Activated T-helper 1 cell treated with anti-CD3 and anti-CD28 coated beads, Interleukin-12 subunit alpha, Interleukin-12 subunit beta, Interleukin-2, Interleukin-4 antibody, amounts not matched to agents 30 ng/mL and 10 ng/mL and 1 ng/mL, durations not matched to agents 14 hours and 24 hours and 36 hours (primary cell): ENCODE measurements at regions of chr22 and their contacts with region 1.

Region 1: DNA sequence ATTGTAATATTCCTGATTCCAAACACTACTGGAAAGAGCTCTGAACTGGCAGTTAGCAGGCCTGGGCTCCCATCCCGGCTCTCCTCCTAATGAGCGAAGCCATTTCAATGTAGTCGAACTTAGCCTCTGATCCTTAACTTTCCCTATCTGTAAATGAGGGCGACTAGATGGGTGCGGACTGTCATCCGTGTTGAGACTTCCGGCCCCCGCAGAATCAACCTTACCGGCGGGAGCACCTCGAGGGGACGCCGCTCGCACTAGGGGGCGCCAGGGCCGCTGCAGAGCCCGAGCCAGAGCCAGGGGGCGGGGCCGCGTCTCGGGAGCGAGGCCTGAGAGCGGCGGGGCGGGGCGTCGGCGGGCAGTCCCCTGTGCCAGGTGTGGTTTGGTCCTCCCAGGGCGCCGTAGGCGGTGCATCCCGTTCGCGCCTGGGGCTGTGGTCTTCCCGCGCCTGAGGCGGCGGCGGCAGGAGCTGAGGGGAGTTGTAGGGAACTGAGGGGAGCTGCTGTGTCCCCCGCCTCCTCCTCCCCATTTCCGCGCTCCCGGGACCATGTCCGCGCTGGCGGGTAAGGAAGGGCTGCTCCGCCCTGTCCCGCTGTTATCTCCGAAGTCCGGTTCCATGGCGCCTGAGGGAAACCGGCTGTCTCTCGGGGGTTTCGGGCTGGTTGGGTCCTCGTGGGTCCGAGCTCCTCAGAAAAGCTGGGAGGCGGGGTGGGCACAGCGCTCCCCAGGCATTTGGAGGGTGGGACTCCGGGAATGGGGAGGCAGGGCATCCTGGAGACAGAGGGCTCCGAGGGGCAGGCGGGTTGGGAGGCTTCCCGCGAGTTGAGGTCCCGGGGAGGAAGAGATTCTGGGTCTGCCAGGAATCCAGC is at the start of gene LIMK2:
- DNase-seq: peak; percentile 95
- H3K4me3 Mint-ChIP-seq: peak within 1 kb of the TSS; percentile 89
- H3K27ac Mint-ChIP-seq: peak within 1 kb of the TSS; percentile 83
- H3K4me1 Mint-ChIP-seq: peaks cover 54% of the 10 kb centered on the region
- H3K27me3 Mint-ChIP-seq: no peaks in the 10 kb centered on the region
- total RNA-seq, gene LIMK2: 39.8 and 40.7 TPM in 2 replicates

Region 2: GRCh38 chr22:30628491-30628890 is 583.6 kb before region 1 on chr22:
- intact Hi-C with region 1: no loop called
- DNase-seq: no peak
- H3K4me3 Mint-ChIP-seq: no peak overlapping the region
- H3K27ac Mint-ChIP-seq: no peak overlapping the region
- H3K4me1 Mint-ChIP-seq: no peaks in the 10 kb centered on the region
- H3K27me3 Mint-ChIP-seq: no peaks in the 10 kb centered on the region

Region 3: GRCh38 chr22:30968924-30969539 is 243.1 kb before region 1 on chr22 and contains the start of gene TUG1:
- intact Hi-C with region 1: loop called (anchors 10 kb)
- DNase-seq: peak; percentile 97
- H3K4me3 Mint-ChIP-seq: peak within 1 kb of the TSS; percentile 91
- H3K27ac Mint-ChIP-seq: peak within 1 kb of the TSS; percentile 96
- H3K4me1 Mint-ChIP-seq: peaks cover 65% of the 10 kb centered on the region
- H3K27me3 Mint-ChIP-seq: no peaks in the 10 kb centered on the region
- total RNA-seq, gene TUG1: 68.0 and 71.3 TPM in 2 replicates

Region 4: DNA sequence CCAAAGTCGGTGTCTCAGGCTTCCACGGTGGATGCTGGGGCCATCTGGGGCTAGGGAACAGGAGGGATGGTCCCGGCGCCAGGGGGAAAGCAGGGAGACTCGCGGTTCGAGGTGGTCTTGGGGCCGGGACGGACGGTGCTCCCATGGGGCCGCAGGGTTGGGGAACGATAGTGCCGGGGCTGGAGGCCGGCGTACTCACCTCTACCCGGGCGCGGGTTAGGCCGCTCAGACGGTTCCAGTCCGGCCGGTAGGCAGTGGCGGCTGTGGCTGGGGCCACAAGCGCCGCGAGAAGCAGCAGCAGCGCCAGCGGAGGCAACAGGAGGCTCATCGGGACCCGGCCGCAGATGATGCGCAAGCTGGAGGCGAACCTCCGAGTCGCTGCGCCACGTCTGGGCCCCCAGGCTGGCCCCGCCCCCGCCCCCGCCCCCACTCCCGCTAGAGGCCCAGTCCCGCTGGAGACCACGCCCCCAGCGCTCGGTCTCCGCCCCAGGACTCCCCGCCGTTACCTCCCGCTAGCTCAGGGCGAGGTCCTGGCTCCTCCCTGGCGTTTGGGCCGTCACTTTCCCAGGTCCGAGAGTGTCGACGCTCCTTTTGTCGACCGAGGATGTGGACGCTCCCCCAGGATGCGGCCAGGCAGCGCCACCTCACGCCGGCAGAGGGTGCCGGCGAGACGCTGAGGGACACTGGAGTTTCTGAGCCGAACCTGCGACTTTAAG is 104.8 kb before region 1 on chr22 and contains the start of gene SELENOM:
- intact Hi-C with region 1: loop called (anchors 1 kb)
- DNase-seq: peak; percentile 86
- H3K4me3 Mint-ChIP-seq: peak within 1 kb of the TSS; percentile 83
- H3K27ac Mint-ChIP-seq: peak within 1 kb of the TSS; percentile 33
- H3K4me1 Mint-ChIP-seq: peaks cover 19% of the 10 kb centered on the region
- H3K27me3 Mint-ChIP-seq: peaks cover 6% of the 10 kb centered on the region
- total RNA-seq, gene SELENOM: 6.4 and 9.8 TPM in 2 replicates

Region 5: GRCh38 chr22:31122532-31123291 is 89.4 kb before region 1 on chr22 and contains the start of gene INPP5J:
- intact Hi-C with region 1: no loop called
- DNase-seq: no peak
- H3K4me3 Mint-ChIP-seq: no peak within 1 kb of the TSS
- H3K27ac Mint-ChIP-seq: peak within 1 kb of the TSS; percentile 19
- H3K4me1 Mint-ChIP-seq: no peaks in the 10 kb centered on the region
- H3K27me3 Mint-ChIP-seq: peaks cover 1% of the 10 kb centered on the region
- total RNA-seq, gene INPP5J: 0.17 TPM in 1 of 2 replicates, not detected in the other

Region 6: DNA sequence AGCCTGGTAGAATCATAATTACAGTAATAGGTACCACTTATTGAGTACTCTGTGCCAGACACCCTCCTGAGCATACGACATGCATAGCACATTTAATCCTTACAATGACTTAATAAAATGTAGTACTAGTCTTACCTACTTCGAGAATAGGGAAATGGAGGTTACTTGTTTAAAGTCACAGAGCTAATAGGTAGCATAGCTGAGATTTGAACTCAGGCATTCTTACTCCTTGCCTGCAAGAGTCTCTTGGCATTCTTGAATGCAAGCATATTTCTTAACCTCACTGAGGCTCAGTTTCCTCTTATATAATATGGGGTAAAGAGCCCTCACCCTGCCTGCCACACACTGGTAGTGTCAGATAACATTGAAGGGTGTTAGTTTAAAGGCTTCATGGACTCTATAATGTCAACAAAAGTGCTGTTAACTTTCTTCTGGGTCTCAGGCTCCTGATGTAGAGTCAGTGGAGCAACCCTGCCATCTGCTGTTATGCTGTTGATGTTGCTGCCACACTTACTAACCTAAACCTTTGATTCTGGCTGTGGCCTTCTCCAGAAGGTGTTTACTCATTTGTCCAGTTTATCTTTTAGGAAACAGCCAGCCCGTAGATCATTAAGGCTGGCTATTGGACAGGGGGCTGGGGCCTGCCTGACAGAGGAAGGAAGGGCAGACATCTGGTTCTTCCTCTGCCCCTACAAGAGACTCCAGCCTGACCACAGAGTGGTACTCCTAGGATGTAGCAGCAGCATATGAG is 18.9 kb after region 1 on chr22:
- intact Hi-C with region 1: loop called (anchors 1 kb)
- DNase-seq: peak; percentile 25
- H3K4me3 Mint-ChIP-seq: peak overlapping the region; percentile 60
- H3K27ac Mint-ChIP-seq: peak overlapping the region; percentile 57
- H3K4me1 Mint-ChIP-seq: peaks cover 62% of the 10 kb centered on the region
- H3K27me3 Mint-ChIP-seq: no peaks in the 10 kb centered on the region

Region 7: GRCh38 chr22:31313366-31314147 is 101.5 kb after region 1 on chr22:
- intact Hi-C with region 1: loop called (anchors 1 kb)
- DNase-seq: peak; percentile 41
- H3K4me3 Mint-ChIP-seq: no peak overlapping the region
- H3K27ac Mint-ChIP-seq: no peak overlapping the region
- H3K4me1 Mint-ChIP-seq: peaks cover 9% of the 10 kb centered on the region
- H3K27me3 Mint-ChIP-seq: no peaks in the 10 kb centered on the region